Heart left ventricle (tissue), 16 donors: ENCODE measurements at regions of chr10 and their contacts with region 1.

Region 1: DNA sequence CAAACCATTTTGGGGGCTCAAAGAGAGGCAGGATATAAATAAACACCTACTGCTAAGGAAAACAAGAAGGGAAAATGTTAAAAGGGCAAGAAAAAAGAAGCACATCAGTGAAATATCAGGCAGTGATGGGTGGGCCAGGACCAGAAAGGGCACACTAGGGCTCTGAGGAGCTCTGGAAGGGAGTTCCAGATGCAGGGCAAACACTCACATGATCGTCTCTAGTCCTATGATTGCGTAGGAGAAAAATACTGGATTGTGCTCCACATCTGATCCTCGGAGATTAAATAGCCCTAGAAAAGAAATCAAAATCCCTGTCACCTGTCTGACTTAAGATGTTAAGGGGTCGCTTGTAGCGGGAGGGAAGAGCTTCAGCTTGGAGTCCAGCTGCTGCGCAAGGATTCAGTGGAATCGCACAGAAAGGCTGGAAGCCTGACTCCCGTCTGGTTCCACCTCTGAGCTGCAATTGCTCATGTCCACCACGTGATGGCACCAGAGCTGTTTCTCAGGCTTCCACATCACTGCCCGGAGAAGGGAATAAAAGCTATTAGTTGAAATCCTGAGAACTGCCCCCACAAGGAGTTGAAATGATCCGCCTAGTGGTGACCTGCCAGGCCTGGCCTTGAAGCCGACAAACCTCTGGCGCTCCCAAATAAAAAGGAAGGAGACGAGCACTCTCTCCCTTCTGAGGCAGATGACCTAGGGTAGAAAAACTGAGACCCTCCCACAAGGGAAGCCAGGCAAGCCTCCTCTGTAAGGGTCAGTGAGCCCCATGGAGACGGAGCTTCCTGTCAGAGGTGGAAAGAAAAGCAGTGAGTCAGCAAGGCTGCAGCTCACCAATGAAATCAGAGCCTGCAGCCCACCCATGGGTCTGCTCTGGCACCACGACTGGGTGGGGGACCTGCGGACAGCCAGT is 39.2 kb downstream of the XPNPEP1 start:
- DNase-seq: peak; percentile 68 to 76 (median 72)
- ATAC-seq: peak; percentile 77 to 82 (median 80)
- H3K4me3 ChIP-seq: peak overlapping the region in 6 of 12 donors; percentile 14 to 40 (median 26)
- H3K27ac ChIP-seq: peak overlapping the region in 11 of 12 donors; percentile 11 to 71 (median 49)
- H3K4me1 ChIP-seq: peaks cover 0 to 35% (median 15%) of the 10 kb centered on the region in 12 donors
- H3K27me3 ChIP-seq: no peaks in the 10 kb centered on the region
- CTCF ChIP-seq: peak; percentile 90 to 98 (median 96)
- POLR2A ChIP-seq: no peak

Region 2: DNA sequence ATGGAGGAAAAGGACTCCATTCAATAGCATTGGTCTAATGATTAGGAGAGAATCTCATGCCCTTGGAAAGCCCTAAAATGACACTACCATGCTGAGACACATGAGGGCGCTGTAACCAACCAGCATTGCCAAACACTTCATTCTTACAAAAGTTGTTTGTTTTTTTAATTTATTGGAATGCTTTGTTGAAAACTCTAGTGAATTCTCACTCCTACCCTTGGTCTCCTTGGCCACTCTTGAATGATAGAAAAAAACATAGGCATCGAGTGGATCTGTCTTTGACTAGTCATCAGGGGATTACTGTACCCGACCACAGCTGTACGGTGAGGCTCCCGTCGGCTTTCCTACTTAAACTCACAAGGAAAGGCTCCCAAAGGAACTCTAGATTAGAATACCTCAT is 94.4 kb after region 1 on chr10:
- intact Hi-C with region 1: loop called in 6 of 10 experiments (anchors 5 to 10 kb)
- DNase-seq: peak in 3 of 5 donors; percentile 34 to 40 (median 40)
- ATAC-seq: peak in 3 of 4 donors; percentile 29 to 65 (median 57)
- H3K4me3 ChIP-seq: peak overlapping the region in 1 of 12 donors; percentile 3
- H3K27ac ChIP-seq: peak overlapping the region in 9 of 12 donors; percentile 2 to 45 (median 28)
- H3K4me1 ChIP-seq: peaks cover 0 to 50% (median 21%) of the 10 kb centered on the region in 12 donors
- H3K27me3 ChIP-seq: no peaks in the 10 kb centered on the region
- CTCF ChIP-seq: peak; percentile 62 to 87 (median 79)
- POLR2A ChIP-seq: no peak

Region 3: GRCh38 chr10:110101464-110102144 is 217.5 kb after region 1 on chr10:
- intact Hi-C with region 1: loop called in 1 of 10 experiments (anchors 10 kb)
- DNase-seq: no peak
- ATAC-seq: no peak
- H3K4me3 ChIP-seq: no peak overlapping the region
- H3K27ac ChIP-seq: no peak overlapping the region
- H3K4me1 ChIP-seq: peaks cover 0 to 18% (median 3%) of the 10 kb centered on the region in 12 donors
- H3K27me3 ChIP-seq: no peaks in the 10 kb centered on the region
- CTCF ChIP-seq: no peak
- POLR2A ChIP-seq: no peak

Region 4: GRCh38 chr10:110137142-110137545 is 253.0 kb after region 1 on chr10:
- intact Hi-C with region 1: loop called in 7 of 10 experiments (anchors 2 to 10 kb)
- DNase-seq: no peak
- ATAC-seq: peak; percentile 58 to 79 (median 78)
- H3K4me3 ChIP-seq: peak overlapping the region in 1 of 12 donors; percentile 33
- H3K27ac ChIP-seq: peak overlapping the region in 8 of 12 donors; percentile 10 to 84 (median 42)
- H3K4me1 ChIP-seq: peaks cover 4 to 43% (median 19%) of the 10 kb centered on the region in 12 donors
- H3K27me3 ChIP-seq: no peaks in the 10 kb centered on the region
- CTCF ChIP-seq: peak; percentile 67 to 90 (median 82)
- POLR2A ChIP-seq: no peak

Region 5: GRCh38 chr10:110225756-110226542 is 341.8 kb after region 1 on chr10:
- intact Hi-C with region 1: loop called in 3 of 10 experiments (anchors 5 to 10 kb)
- DNase-seq: peak; percentile 92 to 95 (median 95)
- ATAC-seq: peak; percentile 55 to 78 (median 70)
- H3K4me3 ChIP-seq: peak overlapping the region; percentile 50 to 93 (median 87)
- H3K27ac ChIP-seq: peak overlapping the region; percentile 76 to 96 (median 88)
- H3K4me1 ChIP-seq: peaks cover 12 to 61% (median 39%) of the 10 kb centered on the region in 12 donors
- H3K27me3 ChIP-seq: no peaks in the 10 kb centered on the region
- CTCF ChIP-seq: peak; percentile 55 to 91 (median 72)
- POLR2A ChIP-seq: peak in 1 of 2 donors; percentile 39

Region 6: DNA sequence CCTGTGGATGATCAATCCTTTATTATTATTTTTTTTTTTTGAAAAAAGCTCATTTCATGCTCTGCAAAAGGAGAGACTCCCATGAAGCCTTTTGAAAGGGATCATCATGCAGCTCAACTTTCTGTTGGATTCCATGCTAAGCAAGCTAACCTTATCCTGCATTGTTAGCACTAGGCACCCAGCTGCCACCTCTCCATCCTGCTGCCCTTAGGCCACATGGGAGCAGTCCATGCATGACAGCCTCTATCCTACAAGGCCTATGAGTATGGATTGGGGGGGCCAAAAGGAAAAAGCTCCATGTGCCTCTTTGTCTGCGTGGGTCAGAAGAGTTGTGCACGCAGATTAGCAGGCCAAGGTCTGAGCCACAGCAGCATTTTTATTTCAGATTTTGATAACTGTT is 401.4 kb after region 1 on chr10:
- intact Hi-C with region 1: loop called in 3 of 10 experiments (anchors 5 to 10 kb)
- DNase-seq: no peak
- ATAC-seq: peak in 1 of 4 donors; percentile 19
- H3K4me3 ChIP-seq: no peak overlapping the region
- H3K27ac ChIP-seq: no peak overlapping the region
- H3K4me1 ChIP-seq: peaks cover 0 to 11% (median 0%) of the 10 kb centered on the region in 12 donors
- H3K27me3 ChIP-seq: no peaks in the 10 kb centered on the region
- CTCF ChIP-seq: no peak
- POLR2A ChIP-seq: no peak